Activated naive CD4-positive, alpha-beta T cell treated with anti-CD3 and anti-CD28 coated beads for 36 hours (primary cell): ENCODE measurements at regions of chr12 and their contacts with region 1.

Region 1: DNA sequence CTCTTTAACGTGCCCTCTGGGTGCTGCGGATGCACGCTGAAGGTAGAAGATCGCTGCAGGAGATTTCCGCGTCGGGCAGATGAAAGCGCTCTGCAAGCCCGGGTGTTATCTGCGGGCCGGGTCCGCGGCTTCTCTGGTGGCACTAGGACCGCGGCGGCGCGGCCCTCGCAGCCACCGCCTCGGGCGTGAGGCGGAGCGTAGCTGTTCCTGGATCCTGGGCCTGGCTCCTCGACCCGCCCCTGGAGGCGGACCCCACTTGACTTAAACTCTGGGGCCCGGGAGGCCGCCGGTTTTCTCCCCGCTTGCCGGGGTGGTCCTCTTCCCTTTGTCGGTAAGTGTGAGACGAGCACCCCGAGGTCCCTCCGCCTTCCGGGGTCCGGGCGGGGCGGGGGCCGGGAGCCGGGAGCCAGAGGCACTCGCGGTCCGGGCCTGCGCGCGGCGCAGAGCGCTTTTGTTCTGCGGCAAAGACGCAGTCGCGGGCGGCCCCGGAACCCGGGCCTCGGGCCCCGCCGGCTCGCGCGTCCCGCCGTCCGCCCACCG is at the start of gene RESF1:
- DNase-seq: peak; percentile 88
- H3K4me3 Mint-ChIP-seq: peak within 1 kb of the TSS; percentile 94
- H3K27ac Mint-ChIP-seq: peak within 1 kb of the TSS; percentile 99
- H3K4me1 Mint-ChIP-seq: peaks cover 66% of the 10 kb centered on the region
- H3K27me3 Mint-ChIP-seq: no peaks in the 10 kb centered on the region
- total RNA-seq, gene RESF1: 65.6 to 73.5 TPM

Region 2: GRCh38 chr12:31325877-31326631 is 633.2 kb before region 1 on chr12 and contains the start of gene SINHCAF:
- CTCF ChIA-PET with region 1: no interaction called
- intact Hi-C with region 1: loop called (anchors 1 kb)
- DNase-seq: peak; percentile 99
- H3K4me3 Mint-ChIP-seq: peak within 1 kb of the TSS; percentile 96
- H3K27ac Mint-ChIP-seq: peak within 1 kb of the TSS; percentile 99
- H3K4me1 Mint-ChIP-seq: peaks cover 20% of the 10 kb centered on the region
- H3K27me3 Mint-ChIP-seq: no peaks in the 10 kb centered on the region
- total RNA-seq, gene SINHCAF: 158 to 169 TPM

Region 3: DNA sequence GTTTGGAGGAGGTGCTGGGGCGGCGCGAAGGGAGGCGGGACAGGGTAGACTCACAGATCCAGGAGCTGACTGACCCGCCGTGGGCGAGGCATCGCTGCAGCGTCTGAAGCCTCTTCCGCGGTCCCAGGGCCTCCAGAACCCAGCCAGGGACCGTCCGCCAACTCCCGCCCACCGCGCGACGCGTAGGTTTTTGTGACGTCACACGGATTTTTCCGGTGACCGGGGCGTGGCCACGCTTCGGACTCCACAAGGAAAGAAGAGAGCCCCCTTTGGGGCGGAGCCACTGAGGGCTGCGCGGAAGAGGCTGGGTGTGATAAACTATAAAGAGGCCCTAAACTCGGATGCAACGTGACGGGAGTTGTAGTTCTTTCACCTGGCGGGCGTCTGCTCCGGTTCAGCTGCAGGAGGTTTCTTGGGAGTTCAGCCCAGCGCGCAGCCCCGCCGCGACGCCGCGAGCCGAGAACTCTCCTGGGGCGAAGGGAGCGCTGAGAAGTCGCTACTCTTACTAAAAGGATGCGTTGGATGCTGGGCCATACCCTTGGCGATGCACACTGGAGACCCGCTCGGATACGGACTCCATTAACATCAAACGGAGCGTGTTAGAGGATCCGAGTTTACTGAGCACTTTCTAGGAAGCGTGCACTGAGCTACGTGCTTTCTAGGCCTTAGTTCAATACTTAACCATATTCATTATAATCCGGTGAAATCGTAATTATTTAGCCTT is 230.2 kb before region 1 on chr12 and contains the start of gene AMN1:
- CTCF ChIA-PET with region 1: interaction called, 8 read pairs
- intact Hi-C with region 1: loop called (anchors 1 kb)
- DNase-seq: peak; percentile 99
- H3K4me3 Mint-ChIP-seq: peak within 1 kb of the TSS; percentile 95
- H3K27ac Mint-ChIP-seq: peak within 1 kb of the TSS; percentile 97
- H3K4me1 Mint-ChIP-seq: peaks cover 38% of the 10 kb centered on the region
- H3K27me3 Mint-ChIP-seq: no peaks in the 10 kb centered on the region
- total RNA-seq, gene AMN1: 6.6 to 8.0 TPM

Region 4: GRCh38 chr12:31896514-31897039 is 62.7 kb before region 1 on chr12:
- CTCF ChIA-PET with region 1: interaction called, 3 read pairs
- intact Hi-C with region 1: loop called (anchors 1 kb)
- DNase-seq: peak; percentile 96
- H3K4me3 Mint-ChIP-seq: peak overlapping the region; percentile 55
- H3K27ac Mint-ChIP-seq: peak overlapping the region; percentile 99
- H3K4me1 Mint-ChIP-seq: peaks cover 58% of the 10 kb centered on the region
- H3K27me3 Mint-ChIP-seq: no peaks in the 10 kb centered on the region

Region 5: GRCh38 chr12:32025906-32026305 is 66.7 kb after region 1 on chr12:
- CTCF ChIA-PET with region 1: interaction called, 3 read pairs
- intact Hi-C with region 1: loop called (anchors 1 kb)
- DNase-seq: peak; percentile 84
- H3K4me3 Mint-ChIP-seq: no peak overlapping the region
- H3K27ac Mint-ChIP-seq: peak overlapping the region; percentile 81
- H3K4me1 Mint-ChIP-seq: peaks cover 24% of the 10 kb centered on the region
- H3K27me3 Mint-ChIP-seq: no peaks in the 10 kb centered on the region

Region 6: DNA sequence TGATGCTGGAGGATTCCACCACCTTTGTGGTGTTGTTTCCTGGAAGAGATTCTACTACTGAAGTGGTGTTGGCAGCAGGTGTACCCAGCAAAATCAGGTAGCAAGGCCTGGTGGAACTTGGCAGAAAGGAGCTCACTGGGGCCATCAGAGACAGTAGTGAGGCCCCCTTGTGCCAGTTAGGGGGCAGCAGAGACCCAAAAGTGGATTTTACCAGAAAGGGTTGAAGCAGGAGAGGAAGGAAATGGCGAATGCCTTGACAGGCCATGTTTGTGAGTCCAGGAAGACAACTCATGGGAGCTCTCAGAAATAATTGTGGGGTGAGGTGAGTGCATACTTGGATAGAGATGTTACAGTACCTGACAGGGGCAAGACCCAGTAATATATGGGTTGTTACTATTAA is 302.4 kb after region 1 on chr12:
- CTCF ChIA-PET with region 1: no interaction called
- intact Hi-C with region 1: loop called (anchors 5 kb)
- DNase-seq: peak; percentile 46
- H3K4me3 Mint-ChIP-seq: no peak overlapping the region
- H3K27ac Mint-ChIP-seq: no peak overlapping the region
- H3K4me1 Mint-ChIP-seq: peaks cover 21% of the 10 kb centered on the region
- H3K27me3 Mint-ChIP-seq: no peaks in the 10 kb centered on the region